ENCODE measurements at regions of chr13 and their contacts with region 1.

Region 1: GRCh38 chr13:32650705-32651311 is 64.6 kb downstream of the PDS5B start:
- DNase-seq: peak; percentile 72
- ATAC-seq: peak; percentile 80
- H3K4me3 Mint-ChIP-seq: no peak overlapping the region
- H3K27ac Mint-ChIP-seq: no peak overlapping the region
- H3K4me1 Mint-ChIP-seq: peaks cover 24% of the 10 kb centered on the region
- H3K27me3 Mint-ChIP-seq: no peaks in the 10 kb centered on the region

Region 2: DNA sequence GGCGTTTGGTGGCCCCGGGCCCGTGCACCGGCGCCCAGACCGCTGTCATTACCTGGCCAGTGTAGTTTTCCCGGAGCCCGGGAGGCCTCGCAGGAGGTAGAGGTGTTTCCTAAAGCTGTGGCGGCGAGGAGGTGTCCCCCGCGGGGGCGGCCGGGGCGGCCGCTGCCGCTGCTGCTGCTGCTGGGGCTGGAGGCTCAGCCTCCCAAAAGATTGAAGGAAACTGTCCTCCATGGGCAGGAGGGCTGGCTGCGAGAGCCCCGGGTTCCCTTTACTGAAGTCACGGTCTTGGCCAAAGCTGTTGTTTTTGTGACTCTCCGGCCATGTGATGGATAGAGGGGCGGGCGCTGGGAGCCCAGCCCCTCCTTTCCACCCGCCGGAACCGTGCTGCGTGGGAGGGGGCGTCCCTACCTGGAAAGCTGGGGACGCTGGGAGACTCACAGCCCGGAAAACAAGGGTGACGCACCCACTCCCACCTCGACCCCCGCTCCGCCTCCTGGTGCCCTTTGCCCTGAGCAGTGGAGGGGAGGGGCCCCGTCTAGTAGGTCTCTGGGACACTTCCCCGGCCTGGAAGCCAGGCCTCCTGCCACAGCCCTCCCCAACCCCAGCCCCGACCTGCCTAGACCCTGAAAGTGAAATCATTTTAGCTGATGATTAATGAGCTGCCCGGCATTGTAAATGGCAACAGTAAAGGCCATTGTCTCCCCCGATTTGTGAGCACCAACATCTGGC is 222.8 kb before region 1 on chr13 and contains the start of gene N4BP2L1:
- CTCF ChIA-PET with region 1: no interaction called
- POLR2A ChIA-PET with region 1: no interaction called
- DNase-seq: peak; percentile 82
- ATAC-seq: peak; percentile 60
- H3K4me3 Mint-ChIP-seq: peak within 1 kb of the TSS; percentile 86
- H3K27ac Mint-ChIP-seq: peak within 1 kb of the TSS; percentile 97
- H3K4me1 Mint-ChIP-seq: peaks cover 47% of the 10 kb centered on the region
- H3K27me3 Mint-ChIP-seq: no peaks in the 10 kb centered on the region
- total RNA-seq, gene N4BP2L1: 27.7 to 27.8 TPM

Region 3: DNA sequence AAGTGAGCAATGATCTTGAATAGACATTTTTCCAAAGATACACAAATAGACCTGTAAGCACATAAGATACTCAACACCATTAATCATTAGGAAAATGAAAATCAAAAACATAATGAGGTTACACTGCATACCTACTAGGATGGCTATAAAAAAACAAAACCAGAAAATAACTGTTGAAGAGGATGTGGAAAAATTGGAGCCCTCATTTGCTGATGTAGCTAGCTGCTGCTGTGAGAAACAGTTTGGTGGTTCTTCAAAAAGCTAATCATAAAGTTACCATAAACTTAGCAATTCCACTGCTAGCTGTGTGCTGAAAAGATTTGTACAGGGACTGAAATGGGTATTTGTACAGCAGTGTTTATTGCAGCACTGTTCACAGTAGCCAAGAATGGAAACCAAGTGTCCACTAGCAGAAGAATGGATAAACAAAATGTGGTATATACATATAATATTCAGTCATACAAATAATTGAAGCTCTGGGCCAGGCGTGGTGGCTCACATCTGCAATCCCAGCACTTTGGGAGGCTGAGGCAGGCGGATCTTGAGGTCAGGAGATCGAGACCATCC is 18.4 kb before region 1 on chr13:
- CTCF ChIA-PET with region 1: interaction called, 12 read pairs
- POLR2A ChIA-PET with region 1: interaction called, 3 read pairs
- DNase-seq: no peak
- ATAC-seq: no peak
- H3K4me3 Mint-ChIP-seq: no peak overlapping the region
- H3K27ac Mint-ChIP-seq: no peak overlapping the region
- H3K4me1 Mint-ChIP-seq: peaks cover 17% of the 10 kb centered on the region
- H3K27me3 Mint-ChIP-seq: no peaks in the 10 kb centered on the region

Region 4: GRCh38 chr13:32639502-32640105 is 11.2 kb before region 1 on chr13:
- CTCF ChIA-PET with region 1: interaction called, 38 read pairs
- POLR2A ChIA-PET with region 1: no interaction called
- DNase-seq: peak; percentile 68
- ATAC-seq: peak; percentile 67
- H3K4me3 Mint-ChIP-seq: no peak overlapping the region
- H3K27ac Mint-ChIP-seq: no peak overlapping the region
- H3K4me1 Mint-ChIP-seq: peaks cover 27% of the 10 kb centered on the region
- H3K27me3 Mint-ChIP-seq: no peaks in the 10 kb centered on the region

Region 5: DNA sequence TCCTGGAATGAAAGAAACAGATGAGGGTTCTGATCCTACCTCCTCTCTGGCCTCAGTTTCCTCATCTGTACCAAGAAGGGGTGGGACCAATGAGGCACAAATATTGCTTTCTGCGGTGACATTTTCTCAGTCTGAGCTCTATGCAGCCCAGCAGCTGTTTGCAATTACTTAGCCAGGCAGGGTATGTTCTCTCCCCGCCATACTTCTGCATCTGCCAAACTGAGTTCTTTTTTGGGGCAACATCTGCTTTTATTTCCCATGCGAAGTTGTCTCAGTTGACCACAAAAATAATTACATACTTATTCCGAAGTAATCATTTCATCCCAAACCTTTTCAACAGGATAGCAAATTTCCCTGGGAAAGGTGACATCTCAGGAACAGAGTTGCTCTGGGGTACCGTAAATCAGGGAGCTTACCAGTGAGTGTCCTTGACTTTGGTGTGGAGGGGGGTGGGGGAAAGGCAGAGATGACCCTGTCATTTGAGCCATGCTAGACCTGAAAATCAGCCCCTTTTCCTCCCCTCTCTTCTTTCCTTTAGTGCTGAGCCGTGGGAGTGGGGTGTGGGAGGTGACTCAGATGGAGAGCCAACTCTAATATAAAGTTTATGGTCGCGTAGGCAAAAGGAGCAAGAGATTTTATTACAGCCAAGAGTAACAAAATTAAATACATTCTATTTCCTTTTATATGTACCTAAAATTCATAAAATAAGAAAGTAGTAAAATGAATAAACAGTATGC is 199.7 kb after region 1 on chr13:
- CTCF ChIA-PET with region 1: no interaction called
- POLR2A ChIA-PET with region 1: no interaction called
- DNase-seq: peak; percentile 9
- ATAC-seq: no peak
- H3K4me3 Mint-ChIP-seq: no peak overlapping the region
- H3K27ac Mint-ChIP-seq: no peak overlapping the region
- H3K4me1 Mint-ChIP-seq: no peaks in the 10 kb centered on the region
- H3K27me3 Mint-ChIP-seq: peaks cover 7% of the 10 kb centered on the region